ENCODE measurements at regions of chr14 and their contacts with region 1.

Region 1: GRCh38 chr14:76918751-76919543 is 92.7 kb downstream of the LRRC74A start:
- DNase-seq: no peak
- H3K4me3 ChIP-seq: 0 out of 8 replicates have a peak overlapping the region, but pooled peaks of 1 of the 4 experiments have one; percentile 5
- H3K27ac ChIP-seq: peak overlapping the region; percentile 53; the same call in 1 of the 2 replicates
- H3K4me1 ChIP-seq: peaks cover 17 to 53% (median 42%) of the 10 kb centered on the region in 4 experiments
- H3K27me3 ChIP-seq: no peaks in the 10 kb centered on the region
- CTCF ChIP-seq: peak in 2 of 3 experiments; percentile 8 to 17; a peak in 1 of 4 replicates
- EP300 ChIP-seq: no peak
- POLR2A ChIP-seq: no peak
- RAD21 ChIP-seq: no peak

Region 2: GRCh38 chr14:76931631-76932402 is 12.9 kb after region 1 on chr14:
- CTCF ChIA-PET with region 1: interaction called, 403 read pairs
- POLR2A ChIA-PET with region 1: interaction called, 18 read pairs
- DNase-seq: no peak
- H3K4me3 ChIP-seq: no peak overlapping the region
- H3K27ac ChIP-seq: no peak overlapping the region
- H3K4me1 ChIP-seq: peaks cover 8 to 31% (median 22%) of the 10 kb centered on the region in 4 experiments
- H3K27me3 ChIP-seq: no peaks in the 10 kb centered on the region
- CTCF ChIP-seq: no peak
- EP300 ChIP-seq: no peak
- POLR2A ChIP-seq: no peak
- RAD21 ChIP-seq: no peak

Region 3: DNA sequence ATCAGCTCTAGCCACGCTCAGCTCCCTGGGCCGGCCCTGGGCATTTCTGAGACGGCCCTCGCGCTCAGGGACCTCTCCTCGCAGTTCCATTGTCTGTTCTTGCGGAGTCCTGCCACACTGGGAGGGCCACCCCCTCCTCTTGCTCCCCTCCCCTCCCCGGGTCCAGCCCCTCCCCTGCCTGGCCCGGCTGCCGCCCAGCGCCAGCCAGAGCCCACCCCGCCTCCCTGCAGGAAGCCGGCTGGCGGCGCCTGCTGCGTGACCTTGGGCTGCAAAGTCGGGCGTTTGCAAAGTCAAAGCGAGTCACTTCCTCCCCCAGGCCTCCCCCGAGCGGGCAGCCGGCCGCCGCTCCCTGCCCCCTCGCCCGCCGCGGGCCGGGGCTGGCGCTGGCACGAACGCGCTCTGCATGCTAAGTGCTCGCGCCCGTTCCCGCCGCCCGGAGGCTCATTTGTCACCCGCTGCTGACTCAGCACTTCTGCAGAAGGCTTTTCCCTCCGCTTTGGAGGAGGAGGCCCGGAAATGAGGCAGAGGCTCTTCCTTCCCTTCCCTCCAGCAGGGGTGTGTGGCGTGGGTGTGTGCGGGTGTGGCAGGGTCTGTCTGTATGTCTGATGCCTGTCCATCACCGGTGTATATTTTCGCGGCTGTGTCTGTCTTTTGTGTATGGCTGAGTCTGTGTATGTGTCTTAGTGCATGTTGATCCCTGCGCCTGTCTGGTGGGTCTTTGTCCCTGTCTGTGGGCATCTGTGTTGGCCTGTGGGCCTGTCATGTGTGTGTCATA is 37.6 kb after region 1 on chr14:
- CTCF ChIA-PET with region 1: interaction called, 151 read pairs
- POLR2A ChIA-PET with region 1: interaction called, 28 read pairs
- DNase-seq: peak; percentile 91 to 94
- H3K4me3 ChIP-seq: peak overlapping the region; percentile 11 to 48 (median 26); a peak in 5 of 8 replicates
- H3K27ac ChIP-seq: peak overlapping the region; percentile 83
- H3K4me1 ChIP-seq: peaks cover 35 to 48% (median 41%) of the 10 kb centered on the region in 4 experiments
- H3K27me3 ChIP-seq: no peaks in the 10 kb centered on the region
- CTCF ChIP-seq: no peak; a peak in 1 of 4 replicates
- EP300 ChIP-seq: peak; percentile 36 to 88
- POLR2A ChIP-seq: peak in 1 of 2 experiments; percentile 25; a peak in 2 of 3 replicates
- RAD21 ChIP-seq: peak in 1 of 2 experiments; percentile 24; a peak in 2 of 4 replicates

Region 4: DNA sequence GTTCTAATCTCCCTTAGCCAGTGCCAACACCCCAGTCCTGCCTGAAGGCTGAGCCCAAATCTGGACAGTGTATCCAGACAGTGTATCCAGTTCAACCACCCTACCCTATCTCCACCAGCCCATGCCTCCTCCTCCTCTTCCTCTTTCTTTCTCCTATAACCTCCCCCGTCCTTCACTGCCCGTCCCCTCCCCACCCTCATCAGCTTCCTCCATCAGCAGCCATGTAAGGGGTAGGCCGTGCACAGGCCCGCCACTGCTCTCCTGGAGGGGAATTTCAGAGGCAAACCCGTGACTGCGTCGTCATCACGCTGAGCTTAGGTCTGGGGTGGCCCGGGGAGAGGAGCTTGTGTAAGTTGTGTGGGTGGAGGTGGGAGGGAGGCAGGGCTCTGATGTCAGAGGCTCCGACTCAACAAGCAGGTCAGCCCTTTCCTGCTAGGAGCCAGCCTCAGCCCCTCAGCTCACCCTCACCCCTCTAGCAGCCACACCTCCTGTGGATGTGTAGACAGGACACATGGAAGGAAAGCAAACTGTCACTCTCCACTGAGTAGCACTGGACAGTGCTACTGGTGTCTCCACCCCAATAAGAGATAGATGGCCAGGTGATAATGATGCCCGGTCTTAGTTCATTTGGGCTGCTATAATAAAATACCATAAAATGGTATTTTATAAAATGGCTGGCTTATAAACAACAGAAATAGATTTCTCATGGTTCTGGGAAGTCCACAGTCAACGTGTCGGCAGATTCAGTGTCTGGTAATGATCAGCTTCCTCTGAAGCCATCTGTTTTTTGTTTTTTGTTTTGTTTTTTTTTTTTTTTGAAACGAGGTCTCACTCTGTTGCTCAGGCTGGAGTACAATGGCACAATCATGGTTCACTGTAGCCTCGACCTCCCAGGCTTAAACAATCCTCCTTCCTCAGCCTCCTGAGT is 59.1 kb after region 1 on chr14:
- CTCF ChIA-PET with region 1: interaction called, 15 read pairs
- POLR2A ChIA-PET with region 1: no interaction called
- DNase-seq: peak in 1 of 2 experiments; percentile 48
- H3K4me3 ChIP-seq: no peak overlapping the region
- H3K27ac ChIP-seq: no peak overlapping the region
- H3K4me1 ChIP-seq: peaks cover 0 to 10% (median 2%) of the 10 kb centered on the region in 4 experiments; a peak in 4 of 7 replicates
- H3K27me3 ChIP-seq: no peaks in the 10 kb centered on the region
- CTCF ChIP-seq: no peak
- EP300 ChIP-seq: no peak
- POLR2A ChIP-seq: no peak
- RAD21 ChIP-seq: no peak

Region 5: DNA sequence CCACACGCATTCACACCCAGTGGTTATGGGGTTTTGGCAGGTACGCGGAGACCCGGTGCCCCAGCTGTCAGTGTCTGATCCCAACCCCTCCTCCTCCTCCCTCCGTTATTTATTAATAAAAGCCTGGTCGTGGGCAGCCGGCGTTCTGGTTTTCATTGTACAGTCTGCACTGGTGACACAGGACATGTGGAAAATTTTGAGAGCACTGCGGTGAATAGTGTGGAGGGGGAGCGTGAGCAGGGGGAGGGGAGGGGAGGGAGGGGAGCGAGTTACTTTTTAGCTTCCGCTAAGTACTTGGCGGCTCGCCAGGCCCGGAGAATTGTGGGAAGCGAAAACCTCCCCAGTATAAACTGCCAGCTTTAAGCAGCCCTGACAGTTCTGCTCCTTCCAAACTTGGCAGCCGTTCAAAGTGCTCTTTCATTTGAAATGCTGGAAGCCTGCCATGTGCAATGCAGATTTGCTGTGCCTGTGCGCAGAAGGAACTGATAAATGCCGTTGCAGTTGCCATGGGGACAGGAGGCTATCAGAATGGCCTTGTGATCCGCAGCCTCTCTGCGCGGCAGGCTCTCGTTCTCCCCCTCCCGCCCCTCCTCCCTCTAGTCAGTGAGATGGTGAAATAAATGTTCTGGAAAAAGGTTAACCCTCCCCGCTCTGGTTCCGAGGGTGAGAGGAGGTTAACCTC is 121.3 kb after region 1 on chr14:
- CTCF ChIA-PET with region 1: interaction called, 241 read pairs
- POLR2A ChIA-PET with region 1: interaction called, 6 read pairs
- DNase-seq: peak in 1 of 2 experiments; percentile 80
- H3K4me3 ChIP-seq: peak overlapping the region; percentile 22 to 58 (median 52); a peak in 7 of 8 replicates
- H3K27ac ChIP-seq: no peak overlapping the region
- H3K4me1 ChIP-seq: peaks cover 33 to 65% (median 41%) of the 10 kb centered on the region in 4 experiments; a peak in 6 of 7 replicates
- H3K27me3 ChIP-seq: peaks cover 0 to 4% (median 2%) of the 10 kb centered on the region in 4 experiments; a peak in 2 of 7 replicates
- CTCF ChIP-seq: no peak
- EP300 ChIP-seq: no peak; a peak in 1 of 3 replicates
- POLR2A ChIP-seq: no peak
- RAD21 ChIP-seq: no peak

Region 6: GRCh38 chr14:77067632-77068514 is 148.9 kb after region 1 on chr14:
- CTCF ChIA-PET with region 1: interaction called, 207 read pairs
- POLR2A ChIA-PET with region 1: interaction called, 5 read pairs
- DNase-seq: peak; percentile 62 to 85
- H3K4me3 ChIP-seq: no peak overlapping the region
- H3K27ac ChIP-seq: no peak overlapping the region
- H3K4me1 ChIP-seq: peaks cover 0 to 3% (median 1%) of the 10 kb centered on the region in 4 experiments; a peak in 4 of 7 replicates
- H3K27me3 ChIP-seq: no peaks in the 10 kb centered on the region
- CTCF ChIP-seq: peak; percentile 94 to 98 (median 95)
- EP300 ChIP-seq: no peak
- POLR2A ChIP-seq: no peak
- RAD21 ChIP-seq: peak; percentile 98 to 99

Region 7: DNA sequence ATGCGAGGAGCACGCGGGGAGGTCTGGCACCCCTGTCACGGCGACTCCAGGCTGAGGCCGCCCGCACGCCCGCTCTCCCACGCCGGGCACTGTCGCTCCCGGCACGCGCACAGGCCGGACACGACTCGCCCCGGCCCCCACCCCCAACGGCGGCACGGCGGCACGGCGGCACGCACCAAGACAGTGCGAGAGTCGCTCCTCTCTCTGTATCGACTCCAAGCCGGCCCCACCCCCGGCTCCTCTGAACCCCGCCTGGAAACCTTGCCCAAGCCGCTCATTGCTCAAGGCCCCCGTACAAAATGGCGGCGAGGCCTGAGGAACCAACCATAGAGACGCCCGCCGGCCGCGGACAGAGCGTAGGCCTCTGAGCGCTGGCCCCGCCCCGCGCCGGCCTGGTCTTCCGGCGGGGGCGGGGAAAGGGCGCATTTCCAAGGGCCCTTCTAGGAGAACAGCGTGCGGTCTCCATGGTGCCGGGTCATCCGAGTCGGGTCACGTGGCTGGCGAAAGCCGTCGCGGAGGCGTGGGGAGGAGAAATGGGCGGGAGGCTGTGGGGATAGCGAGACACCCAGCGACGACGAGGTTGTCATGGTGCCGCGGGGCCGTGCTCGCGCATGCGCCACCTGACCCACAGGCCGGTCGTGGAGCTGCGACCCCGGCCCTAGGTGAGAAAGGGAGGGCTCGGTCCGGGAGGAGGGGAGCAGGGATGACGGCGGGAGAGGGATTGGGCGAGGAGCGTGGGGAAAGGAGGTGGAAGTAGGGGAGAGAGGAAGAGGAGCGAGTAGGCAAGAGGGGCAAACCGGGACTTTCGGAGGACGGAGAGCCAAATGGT is 179.0 kb after region 1 on chr14 and contains the start of gene CIPC:
- CTCF ChIA-PET with region 1: interaction called, 23 read pairs
- POLR2A ChIA-PET with region 1: no interaction called
- DNase-seq: peak; percentile 95 to 98
- H3K4me3 ChIP-seq: peak within 1 kb of the TSS; percentile 87 to 96 (median 88)
- H3K27ac ChIP-seq: peak within 1 kb of the TSS; percentile 86
- H3K4me1 ChIP-seq: peaks cover 0 to 8% (median 4%) of the 10 kb centered on the region in 4 experiments; a peak in 4 of 7 replicates
- H3K27me3 ChIP-seq: no peaks in the 10 kb centered on the region
- CTCF ChIP-seq: no peak
- EP300 ChIP-seq: peak in 1 of 2 experiments; percentile 60; a peak in 1 of 3 replicates
- POLR2A ChIP-seq: no peak
- RAD21 ChIP-seq: peak; percentile 13 to 16; a peak in 2 of 4 replicates
- total RNA-seq, gene CIPC: 31.7 and 32.7 TPM in 2 replicates